ENCODE measurements at regions of chr1 and their contacts with region 1.

Region 1: DNA sequence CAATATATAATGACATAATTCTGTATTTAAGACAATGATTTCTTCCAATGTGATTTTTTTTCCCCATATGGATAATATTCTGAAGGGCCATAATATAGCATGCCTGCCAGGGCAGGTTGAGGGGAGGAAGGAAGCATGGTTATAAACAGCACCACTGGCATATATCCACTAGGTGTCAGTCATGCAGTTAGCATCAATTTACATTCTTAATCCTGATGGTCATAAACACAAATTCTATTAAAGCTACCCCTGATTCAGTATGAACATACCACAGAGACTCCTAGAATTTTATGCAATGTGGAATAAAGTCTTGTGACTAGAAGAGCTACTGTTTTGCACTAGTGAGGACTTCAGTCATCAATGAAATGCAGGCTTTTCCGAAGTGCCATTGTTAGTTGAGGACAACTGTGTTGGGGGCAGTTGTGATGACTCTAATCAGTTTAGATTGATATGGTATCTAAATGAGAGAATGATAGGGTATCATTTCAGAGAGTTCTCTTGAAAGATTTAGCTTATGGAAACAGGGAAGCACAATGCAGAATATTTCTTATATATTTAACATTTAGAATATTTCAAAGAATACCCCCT is 342.7 kb upstream of the NR5A2 start:
- DNase-seq: no peak
- H3K4me3 ChIP-seq: no peak overlapping the region
- H3K27ac ChIP-seq: no peak overlapping the region
- H3K4me1 ChIP-seq: peaks cover 4 to 18% (median 7%) of the 10 kb centered on the region in 4 experiments; a peak in 5 of 7 replicates
- H3K27me3 ChIP-seq: no peaks in the 10 kb centered on the region
- CTCF ChIP-seq: peak in 2 of 3 experiments; percentile 56 to 73; a peak in 3 of 4 replicates
- EP300 ChIP-seq: no peak
- POLR2A ChIP-seq: no peak
- RAD21 ChIP-seq: peak; percentile 91 to 93

Region 2: GRCh38 chr1:199701726-199702125 is 16.9 kb after region 1 on chr1:
- CTCF ChIA-PET with region 1: interaction called, 16 read pairs
- POLR2A ChIA-PET with region 1: no interaction called
- DNase-seq: no peak
- H3K4me3 ChIP-seq: no peak overlapping the region
- H3K27ac ChIP-seq: no peak overlapping the region
- H3K4me1 ChIP-seq: no peaks in the 10 kb centered on the region
- H3K27me3 ChIP-seq: no peaks in the 10 kb centered on the region
- CTCF ChIP-seq: no peak
- EP300 ChIP-seq: no peak
- POLR2A ChIP-seq: no peak
- RAD21 ChIP-seq: no peak